ENCODE measurements at regions of chr7 and their contacts with region 1.

Region 1: DNA sequence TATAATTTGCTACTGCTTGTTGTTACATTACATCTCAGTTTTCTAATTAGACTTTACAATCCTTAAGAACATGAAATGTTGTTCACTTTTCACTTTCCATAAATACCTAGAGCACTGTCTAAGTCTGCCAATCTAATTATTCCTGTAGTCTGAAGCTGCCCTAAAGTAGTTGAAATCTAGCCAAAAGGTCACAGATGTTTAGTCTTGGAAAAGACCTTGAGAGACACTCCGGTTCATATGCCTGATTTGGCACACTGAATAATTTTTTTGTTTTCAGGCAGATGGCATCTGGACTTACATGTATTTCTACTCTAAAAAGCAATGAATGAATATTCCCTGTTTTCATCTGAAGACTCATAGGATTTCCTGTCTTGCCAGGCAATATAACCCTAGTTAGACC is 359.1 kb downstream of the ANKRD7 start:
- DNase-seq: no peak
- ATAC-seq: no peak
- H3K4me3 ChIP-seq: no peak overlapping the region
- H3K27ac ChIP-seq: no peak overlapping the region
- H3K4me1 ChIP-seq: no peaks in the 10 kb centered on the region
- H3K27me3 ChIP-seq: no peaks in the 10 kb centered on the region
- CTCF ChIP-seq: no peak
- POLR2A ChIP-seq: no peak
- RAD21 ChIP-seq: no peak

Region 2: GRCh38 chr7:118250860-118251494 is 332.7 kb before region 1 on chr7:
- CTCF ChIA-PET with region 1: no interaction called
- POLR2A ChIA-PET with region 1: no interaction called
- RAD21 ChIA-PET with region 1: no interaction called
- intact Hi-C with region 1: loop called (anchors 10 kb)
- DNase-seq: no peak
- ATAC-seq: no peak
- H3K4me3 ChIP-seq: no peak overlapping the region
- H3K27ac ChIP-seq: no peak overlapping the region
- H3K4me1 ChIP-seq: no peaks in the 10 kb centered on the region
- H3K27me3 ChIP-seq: no peaks in the 10 kb centered on the region
- CTCF ChIP-seq: peak; percentile 15 to 62 (median 53); a peak in 5 of 6 replicates
- POLR2A ChIP-seq: no peak
- RAD21 ChIP-seq: peak; percentile 34

Region 3: DNA sequence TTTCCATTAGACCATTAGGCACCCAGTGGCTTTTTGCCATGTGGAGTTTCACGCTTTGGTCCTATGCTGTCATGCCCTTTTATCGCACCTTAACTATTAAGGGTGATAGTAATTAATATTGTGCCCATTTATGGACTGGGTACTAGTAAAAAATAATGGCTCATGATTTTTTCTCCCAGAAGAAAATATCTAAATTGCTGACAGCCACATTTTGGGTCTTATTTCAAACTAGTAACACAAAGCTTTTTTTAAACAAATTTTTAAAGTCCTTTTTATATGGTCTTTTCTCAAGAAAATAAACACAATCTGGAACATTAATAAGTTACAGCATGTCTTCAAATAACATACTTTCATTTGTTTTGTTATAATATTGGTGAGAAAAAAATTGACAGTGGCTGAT is 179.4 kb before region 1 on chr7:
- CTCF ChIA-PET with region 1: no interaction called
- POLR2A ChIA-PET with region 1: no interaction called
- RAD21 ChIA-PET with region 1: no interaction called
- intact Hi-C with region 1: no loop called
- DNase-seq: no peak
- ATAC-seq: no peak
- H3K4me3 ChIP-seq: no peak overlapping the region
- H3K27ac ChIP-seq: no peak overlapping the region
- H3K4me1 ChIP-seq: no peaks in the 10 kb centered on the region
- H3K27me3 ChIP-seq: no peaks in the 10 kb centered on the region
- CTCF ChIP-seq: no peak
- POLR2A ChIP-seq: no peak
- RAD21 ChIP-seq: no peak

Measured in HCT116 (cell line).